Calu3 (cell line): ENCODE measurements at regions of chr6 and their contacts with region 1.

Region 1: GRCh38 chr6:72149715-72150114 is 263.4 kb downstream of the RIMS1 start:
- DNase-seq: no peak
- H3K4me3 Mint-ChIP-seq: no peak overlapping the region
- H3K27ac Mint-ChIP-seq: no peak overlapping the region
- H3K4me1 Mint-ChIP-seq: no peaks in the 10 kb centered on the region
- H3K27me3 Mint-ChIP-seq: no peaks in the 10 kb centered on the region
- CTCF ChIP-seq: no peak

Region 2: DNA sequence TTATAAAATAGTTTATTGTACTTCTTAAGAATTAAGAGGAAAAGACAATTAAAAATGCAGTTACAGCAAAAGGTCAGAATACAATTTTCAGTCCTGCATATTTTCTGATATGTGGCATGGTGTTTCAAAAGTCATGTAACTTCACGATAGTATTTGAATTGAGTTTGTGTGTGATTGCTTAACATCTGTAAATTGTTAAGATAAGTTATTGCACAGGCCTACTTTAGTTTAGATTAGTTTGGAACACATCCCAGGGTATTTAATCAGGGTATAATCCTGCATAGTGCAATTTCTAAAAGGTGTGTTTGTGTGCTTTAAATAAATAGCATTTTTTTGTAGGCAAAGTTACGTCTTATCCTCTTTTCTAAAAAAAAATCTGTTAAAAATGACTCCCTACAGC is 26.2 kb after region 1 on chr6:
- CTCF ChIA-PET with region 1: no interaction called
- intact Hi-C with region 1: loop called (anchors 2 kb)
- DNase-seq: no peak
- H3K4me3 Mint-ChIP-seq: no peak overlapping the region
- H3K27ac Mint-ChIP-seq: no peak overlapping the region
- H3K4me1 Mint-ChIP-seq: no peaks in the 10 kb centered on the region
- H3K27me3 Mint-ChIP-seq: peaks cover 5% of the 10 kb centered on the region
- CTCF ChIP-seq: no peak

Region 3: DNA sequence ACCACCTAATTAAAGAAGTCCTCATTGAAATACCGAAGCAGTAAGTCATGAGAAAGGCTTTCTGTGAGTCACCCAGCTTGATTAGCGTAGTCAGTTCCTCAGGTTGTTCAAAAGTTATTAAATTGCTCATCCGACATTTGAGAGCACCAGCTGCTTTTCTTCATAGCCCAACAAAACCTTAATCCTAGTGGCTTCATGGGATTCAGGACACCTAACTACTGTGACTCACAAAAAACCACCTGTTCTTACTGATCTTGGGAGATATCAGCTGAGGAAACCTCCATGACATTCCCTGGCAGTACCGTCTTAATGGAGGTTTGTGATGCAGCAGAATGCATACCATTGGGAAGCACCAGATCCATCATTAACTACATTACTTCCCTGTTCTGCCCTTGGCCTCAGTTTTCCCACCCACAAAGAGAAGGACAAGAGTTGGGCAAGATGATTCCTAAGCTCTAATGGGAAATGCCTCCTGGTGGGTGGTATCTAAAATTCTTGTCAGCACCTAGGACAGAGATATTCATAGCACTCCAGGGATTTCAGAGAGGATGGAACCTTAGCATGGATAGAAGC is 971.8 kb after region 1 on chr6:
- CTCF ChIA-PET with region 1: no interaction called
- intact Hi-C with region 1: no loop called
- DNase-seq: no peak
- H3K4me3 Mint-ChIP-seq: no peak overlapping the region
- H3K27ac Mint-ChIP-seq: no peak overlapping the region
- H3K4me1 Mint-ChIP-seq: no peaks in the 10 kb centered on the region
- H3K27me3 Mint-ChIP-seq: no peaks in the 10 kb centered on the region
- CTCF ChIP-seq: no peak